ENCODE measurements at regions of chr16 and their contacts with region 1.

Region 1: DNA sequence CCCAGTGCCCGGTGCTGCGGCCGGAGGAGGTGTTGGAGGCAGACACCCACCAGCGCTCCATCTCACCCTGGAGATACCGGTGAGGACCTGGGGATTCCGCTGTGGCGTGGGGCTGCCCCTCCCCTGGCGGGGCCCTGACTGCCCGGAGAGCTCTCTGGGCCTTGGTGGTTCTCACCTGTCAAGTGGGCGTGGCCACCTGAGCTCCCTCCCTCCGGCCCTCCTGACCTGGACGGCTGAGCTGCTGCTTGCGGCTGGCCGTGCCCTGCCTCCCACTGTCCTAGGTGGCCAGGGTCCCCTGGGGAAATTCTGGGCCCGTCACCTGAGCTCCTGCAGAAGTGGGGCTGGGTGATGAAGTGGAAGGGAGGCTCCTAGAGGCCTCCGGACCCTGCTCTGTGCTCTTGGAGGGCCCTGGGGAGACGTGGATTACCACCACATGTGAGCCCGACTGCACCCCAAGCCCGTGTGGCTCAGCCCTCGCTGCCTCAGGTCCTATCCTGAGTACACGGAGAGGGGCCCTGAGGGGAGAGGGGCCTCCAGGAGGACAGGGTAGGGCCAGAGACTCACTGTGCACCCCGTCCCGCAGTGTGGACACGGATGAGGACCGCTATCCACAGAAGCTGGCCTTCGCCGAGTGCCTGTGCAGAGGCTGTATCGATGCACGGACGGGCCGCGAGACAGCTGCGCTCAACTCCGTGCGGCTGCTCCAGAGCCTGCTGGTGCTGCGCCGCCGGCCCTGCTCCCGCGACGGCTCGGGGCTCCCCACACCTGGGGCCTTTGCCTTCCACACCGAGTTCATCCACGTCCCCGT is 1.1 kb downstream of the IL17C start:
- DNase-seq: peak in 1 of 2 experiments; percentile 93
- H3K4me3 ChIP-seq: peak overlapping the region in 2 of 4 experiments; percentile 14 to 39; a peak in 2 of 8 replicates
- H3K27ac ChIP-seq: no peak overlapping the region
- H3K4me1 ChIP-seq: peaks cover 5 to 40% (median 26%) of the 10 kb centered on the region in 4 experiments
- H3K27me3 ChIP-seq: peaks cover 0 to 4% (median 1%) of the 10 kb centered on the region in 4 experiments; a peak in 2 of 7 replicates
- CTCF ChIP-seq: no peak
- EP300 ChIP-seq: no peak
- POLR2A ChIP-seq: no peak; a peak in 2 of 3 replicates
- RAD21 ChIP-seq: no peak

Region 2: GRCh38 chr16:88610080-88610479 is 29.4 kb before region 1 on chr16:
- CTCF ChIA-PET with region 1: interaction called, 17 read pairs
- POLR2A ChIA-PET with region 1: interaction called, 11 read pairs
- DNase-seq: no peak
- H3K4me3 ChIP-seq: no peak overlapping the region
- H3K27ac ChIP-seq: no peak overlapping the region
- H3K4me1 ChIP-seq: peaks cover 0 to 10% (median 4%) of the 10 kb centered on the region in 4 experiments; a peak in 3 of 7 replicates
- H3K27me3 ChIP-seq: no peaks in the 10 kb centered on the region
- CTCF ChIP-seq: peak; percentile 44 to 71 (median 48)
- EP300 ChIP-seq: no peak
- POLR2A ChIP-seq: no peak
- RAD21 ChIP-seq: peak; percentile 39 to 58

Region 3: GRCh38 chr16:88619859-88620815 is 19.3 kb before region 1 on chr16:
- CTCF ChIA-PET with region 1: interaction called, 3 read pairs
- POLR2A ChIA-PET with region 1: interaction called, 10 read pairs
- DNase-seq: no peak
- H3K4me3 ChIP-seq: no peak overlapping the region
- H3K27ac ChIP-seq: no peak overlapping the region; the same call in 1 of the 2 replicates
- H3K4me1 ChIP-seq: peaks cover 0 to 6% (median 0%) of the 10 kb centered on the region in 4 experiments; a peak in 1 of 7 replicates
- H3K27me3 ChIP-seq: no peaks in the 10 kb centered on the region
- CTCF ChIP-seq: no peak
- EP300 ChIP-seq: no peak
- POLR2A ChIP-seq: no peak
- RAD21 ChIP-seq: no peak

Region 4: GRCh38 chr16:88628512-88628974 is 10.9 kb before region 1 on chr16:
- CTCF ChIA-PET with region 1: interaction called, 19 read pairs
- POLR2A ChIA-PET with region 1: no interaction called
- DNase-seq: peak; percentile 54 to 86
- H3K4me3 ChIP-seq: no peak overlapping the region
- H3K27ac ChIP-seq: peak overlapping the region; percentile 43; the same call in 1 of the 2 replicates
- H3K4me1 ChIP-seq: peaks cover 0 to 10% (median 3%) of the 10 kb centered on the region in 4 experiments; a peak in 5 of 7 replicates
- H3K27me3 ChIP-seq: no peaks in the 10 kb centered on the region
- CTCF ChIP-seq: peak; percentile 78 to 93 (median 84)
- EP300 ChIP-seq: no peak
- POLR2A ChIP-seq: no peak
- RAD21 ChIP-seq: peak; percentile 28 to 55; a peak in 3 of 4 replicates

Region 5: DNA sequence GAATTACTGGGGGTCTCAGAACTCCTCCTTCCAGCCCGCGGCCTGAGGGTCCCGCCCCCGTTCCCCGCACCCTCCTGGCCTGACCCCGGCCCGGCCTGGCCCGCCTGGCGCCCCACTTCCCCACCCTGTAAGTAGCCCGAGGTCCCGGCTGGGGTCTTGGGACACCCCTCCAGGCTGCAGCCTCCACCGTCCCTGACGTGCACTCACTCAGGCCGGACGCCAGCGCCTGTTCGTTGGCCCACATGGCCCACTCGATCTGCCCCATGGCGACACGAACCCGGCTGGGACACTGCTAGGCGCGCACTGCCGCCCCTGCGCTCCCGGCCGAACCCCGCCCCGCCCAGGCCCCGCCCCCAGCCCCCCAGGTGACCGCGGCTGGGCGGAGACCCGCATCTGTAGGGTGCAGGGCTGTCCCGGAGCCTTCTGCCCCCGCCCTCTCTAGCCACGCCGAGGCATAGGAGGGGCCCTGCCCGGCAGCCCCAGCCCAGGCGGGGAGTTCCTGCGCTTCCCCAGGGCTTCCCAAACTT is 11.4 kb after region 1 on chr16 and contains the start of gene CYBA:
- CTCF ChIA-PET with region 1: interaction called, 5 read pairs
- POLR2A ChIA-PET with region 1: interaction called, 35 read pairs
- DNase-seq: peak in 1 of 2 experiments; percentile 90
- H3K4me3 ChIP-seq: peak within 1 kb of the TSS; percentile 69 to 95 (median 78)
- H3K27ac ChIP-seq: no peak within 1 kb of the TSS
- H3K4me1 ChIP-seq: peaks cover 0 to 11% (median 7%) of the 10 kb centered on the region in 4 experiments; a peak in 5 of 7 replicates
- H3K27me3 ChIP-seq: no peaks in the 10 kb centered on the region
- CTCF ChIP-seq: no peak
- EP300 ChIP-seq: no peak
- POLR2A ChIP-seq: peak in 1 of 2 experiments; percentile 69; a peak in 1 of 3 replicates
- RAD21 ChIP-seq: no peak
- total RNA-seq, gene CYBA: 136 and 161 TPM in 2 replicates

Region 6: GRCh38 chr16:88662843-88663606 is 23.6 kb after region 1 on chr16 and contains the start of gene MVD:
- CTCF ChIA-PET with region 1: no interaction called
- POLR2A ChIA-PET with region 1: interaction called, 18 read pairs
- DNase-seq: peak; percentile 96 to 97
- H3K4me3 ChIP-seq: peak within 1 kb of the TSS; percentile 74 to 84 (median 79)
- H3K27ac ChIP-seq: peak within 1 kb of the TSS; percentile 75; the same call in 1 of the 2 replicates
- H3K4me1 ChIP-seq: peaks cover 0 to 3% (median 0%) of the 10 kb centered on the region in 4 experiments; a peak in 2 of 7 replicates
- H3K27me3 ChIP-seq: no peaks in the 10 kb centered on the region
- CTCF ChIP-seq: no peak
- EP300 ChIP-seq: 0 out of 3 replicates have a peak, but pooled peaks of 1 of the 2 experiments have one; percentile 13
- POLR2A ChIP-seq: peak in 1 of 2 experiments; percentile 62; a peak in 1 of 3 replicates
- RAD21 ChIP-seq: no peak
- total RNA-seq, gene MVD: 77.3 and 80.6 TPM in 2 replicates

Region 7: GRCh38 chr16:88672776-88673175 is 33.3 kb after region 1 on chr16:
- CTCF ChIA-PET with region 1: interaction called, 12 read pairs
- POLR2A ChIA-PET with region 1: interaction called, 13 read pairs
- DNase-seq: peak; percentile 58 to 83
- H3K4me3 ChIP-seq: no peak overlapping the region
- H3K27ac ChIP-seq: no peak overlapping the region
- H3K4me1 ChIP-seq: peaks cover 0 to 5% (median 3%) of the 10 kb centered on the region in 4 experiments; a peak in 4 of 7 replicates
- H3K27me3 ChIP-seq: no peaks in the 10 kb centered on the region
- CTCF ChIP-seq: peak; percentile 77 to 92 (median 90)
- EP300 ChIP-seq: no peak
- POLR2A ChIP-seq: no peak
- RAD21 ChIP-seq: peak; percentile 50 to 60

Measured in H1 (cell line).